ENCODE measurements at regions of chr14 and their contacts with region 1.

Region 1: GRCh38 chr14:53956427-53957201 is at the start of gene BMP4:
- DNase-seq: peak in 1 of 35 experiments; percentile 14
- ATAC-seq: peak; percentile 36 to 56 (median 46)
- H3K4me3 ChIP-seq: peak within 1 kb of the TSS; percentile 33 to 52
- H3K4me3 Mint-ChIP-seq: peak within 1 kb of the TSS; percentile 60 to 85 (median 76)
- H3K27ac ChIP-seq: no peak within 1 kb of the TSS
- H3K27ac Mint-ChIP-seq: peak within 1 kb of the TSS in 1 of 2 donors; percentile 25
- H3K4me1 ChIP-seq: peaks cover 11 to 34% of the 10 kb centered on the region in 2 experiments
- H3K4me1 Mint-ChIP-seq: peaks cover 28 to 41% (median 39%) of the 10 kb centered on the region in 3 donors
- H3K27me3 ChIP-seq: peaks cover 15 to 56% of the 10 kb centered on the region in 2 experiments
- H3K27me3 Mint-ChIP-seq: peaks cover 53 to 69% of the 10 kb centered on the region in 2 donors
- total RNA-seq, gene BMP4: 0.21 to 1.1 (median 0.61) TPM in 4 of 5 donors, not detected in the other

Region 2: DNA sequence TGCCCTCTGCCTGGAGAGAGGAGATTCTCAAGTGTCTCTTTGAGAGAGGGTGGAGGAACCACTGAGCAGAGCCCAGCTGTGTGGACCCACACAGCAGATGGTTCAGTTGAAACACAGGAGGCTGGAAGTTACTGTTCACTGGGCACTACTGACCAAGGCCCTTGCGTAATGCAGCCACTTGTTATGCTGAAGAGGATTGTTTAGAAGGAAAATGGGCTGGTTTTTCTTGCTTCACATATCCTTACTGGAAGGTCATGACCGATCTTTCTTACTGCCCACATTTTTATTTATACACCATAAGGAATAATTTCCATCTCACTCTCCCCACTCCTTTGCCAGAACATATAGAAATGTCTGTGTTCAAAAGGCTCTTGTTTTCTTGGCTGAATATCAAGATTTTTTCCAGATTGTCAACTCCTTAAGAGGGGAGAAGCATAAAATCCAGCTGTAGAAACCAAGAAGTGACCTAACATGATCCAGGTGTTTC is 428.4 kb before region 1 on chr14:
- CTCF ChIA-PET with region 1: no interaction called
- POLR2A ChIA-PET with region 1: no interaction called
- DNase-seq: no peak
- ATAC-seq: no peak
- H3K4me3 ChIP-seq: no peak overlapping the region
- H3K4me3 Mint-ChIP-seq: no peak overlapping the region
- H3K27ac ChIP-seq: no peak overlapping the region
- H3K27ac Mint-ChIP-seq: no peak overlapping the region
- H3K4me1 ChIP-seq: no peaks in the 10 kb centered on the region
- H3K4me1 Mint-ChIP-seq: no peaks in the 10 kb centered on the region
- H3K27me3 ChIP-seq: no peaks in the 10 kb centered on the region
- H3K27me3 Mint-ChIP-seq: no peaks in the 10 kb centered on the region

Region 3: GRCh38 chr14:53967606-53968005 is 11.0 kb after region 1 on chr14:
- CTCF ChIA-PET with region 1: no interaction called
- POLR2A ChIA-PET with region 1: interaction called in 1 of 2 experiments, 12 read pairs
- DNase-seq: no peak
- ATAC-seq: no peak
- H3K4me3 ChIP-seq: no peak overlapping the region
- H3K4me3 Mint-ChIP-seq: no peak overlapping the region
- H3K27ac ChIP-seq: no peak overlapping the region
- H3K27ac Mint-ChIP-seq: no peak overlapping the region
- H3K4me1 ChIP-seq: peaks cover 0 to 10% of the 10 kb centered on the region in 2 experiments
- H3K4me1 Mint-ChIP-seq: peaks cover 7 to 14% (median 12%) of the 10 kb centered on the region in 3 donors
- H3K27me3 ChIP-seq: peaks cover 14 to 17% of the 10 kb centered on the region in 2 experiments
- H3K27me3 Mint-ChIP-seq: peaks cover 33 to 44% of the 10 kb centered on the region in 2 donors